GM12878 (cell line): ENCODE measurements at regions of chr22 and their contacts with region 1.

Region 1: DNA sequence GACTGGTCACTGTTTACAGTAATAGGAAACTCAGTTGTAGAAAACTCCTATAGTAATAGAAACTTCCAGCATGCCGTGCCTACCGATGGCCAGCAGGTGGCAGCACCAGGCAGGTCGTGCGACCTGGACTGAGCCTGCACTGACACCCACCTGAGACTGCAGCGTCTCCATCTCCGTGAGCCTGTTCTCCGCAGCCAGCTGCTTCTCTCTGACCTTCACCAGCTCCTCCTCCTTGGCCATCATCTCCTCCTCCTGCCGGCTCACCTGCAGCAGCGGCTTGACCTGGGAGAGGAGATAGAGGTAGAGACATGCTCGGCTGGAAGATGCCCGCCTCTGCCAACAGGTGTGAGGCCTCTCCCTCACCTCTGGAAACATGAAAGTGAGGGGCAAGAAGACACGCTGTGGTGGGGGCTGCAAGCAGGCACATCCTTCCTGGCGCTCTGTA is 48.5 kb downstream of the APOL1 start:
- DNase-seq: no peak
- ATAC-seq: peak; percentile 91
- H3K4me3 ChIP-seq: no peak overlapping the region
- H3K27ac ChIP-seq: no peak overlapping the region
- H3K4me1 ChIP-seq: no peaks in the 10 kb centered on the region
- H3K27me3 ChIP-seq: no peaks in the 10 kb centered on the region
- CTCF ChIP-seq: peak; percentile 92 to 95 (median 92)
- EP300 ChIP-seq: no peak
- POLR2A ChIP-seq: peak; percentile 69
- RAD21 ChIP-seq: peak; percentile 78

Region 2: GRCh38 chr22:35950262-35950661 is 351.1 kb before region 1 on chr22:
- CTCF ChIA-PET with region 1: no interaction called
- POLR2A ChIA-PET with region 1: no interaction called
- RAD21 ChIA-PET with region 1: no interaction called
- SMC1A ChIA-PET with region 1: no interaction called
- in situ Hi-C with region 1: no loop called
- intact Hi-C with region 1: no loop called
- DNase-seq: no peak
- ATAC-seq: no peak
- H3K4me3 ChIP-seq: no peak overlapping the region
- H3K27ac ChIP-seq: no peak overlapping the region
- H3K4me1 ChIP-seq: no peaks in the 10 kb centered on the region
- H3K27me3 ChIP-seq: peaks cover 0 to 3% of the 10 kb centered on the region in 2 experiments; a peak in 2 of 4 replicates
- CTCF ChIP-seq: no peak
- EP300 ChIP-seq: no peak
- POLR2A ChIP-seq: no peak
- RAD21 ChIP-seq: no peak

Region 3: DNA sequence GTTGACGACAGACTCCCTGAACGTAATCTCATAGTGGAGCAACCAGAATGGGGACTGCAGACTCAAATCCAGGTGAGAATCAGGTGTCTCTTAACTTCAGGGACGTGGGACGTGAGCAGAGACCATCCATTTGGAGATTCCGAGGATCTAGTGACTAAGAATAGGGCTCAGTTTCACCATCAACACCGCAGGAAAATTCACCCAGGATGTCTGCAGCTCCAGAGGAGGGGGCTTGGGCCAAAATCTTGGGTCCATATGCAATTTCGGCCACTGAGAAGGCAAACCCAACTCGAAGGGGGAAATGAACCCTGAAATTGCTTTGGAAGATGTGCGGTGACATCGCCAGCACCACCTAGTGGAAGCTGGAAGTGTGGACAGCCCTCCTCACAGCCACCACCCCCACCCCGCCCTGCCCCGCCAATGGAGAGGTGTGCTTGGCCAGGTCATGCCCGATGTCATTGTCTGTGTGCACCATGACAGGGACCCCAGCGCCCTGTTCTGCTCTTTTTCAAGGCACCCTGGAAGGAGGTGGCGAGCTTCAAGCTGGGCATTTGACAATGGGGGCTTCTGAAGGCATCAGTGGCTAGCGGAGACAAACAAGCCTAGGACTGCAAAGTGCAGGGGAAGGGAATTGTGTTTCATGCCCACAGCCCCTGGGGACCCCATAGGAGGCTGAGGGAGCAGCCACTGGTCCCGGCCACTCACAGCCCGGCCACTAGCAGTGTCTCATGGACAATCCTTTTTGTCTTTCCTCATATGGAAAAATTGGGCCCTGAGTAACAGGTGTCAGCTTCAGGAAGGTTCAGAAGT is 23.7 kb before region 1 on chr22:
- CTCF ChIA-PET with region 1: interaction called, 11 read pairs
- POLR2A ChIA-PET with region 1: no interaction called
- RAD21 ChIA-PET with region 1: interaction called, 3 read pairs
- SMC1A ChIA-PET with region 1: interaction called, 3 read pairs
- in situ Hi-C with region 1: no loop called
- intact Hi-C with region 1: no loop called
- DNase-seq: no peak
- ATAC-seq: peak; percentile 93
- H3K4me3 ChIP-seq: no peak overlapping the region
- H3K27ac ChIP-seq: no peak overlapping the region
- H3K4me1 ChIP-seq: peaks cover 6% of the 10 kb centered on the region
- H3K27me3 ChIP-seq: no peaks in the 10 kb centered on the region
- CTCF ChIP-seq: peak; percentile 79 to 85 (median 83)
- EP300 ChIP-seq: no peak
- POLR2A ChIP-seq: no peak
- RAD21 ChIP-seq: peak; percentile 64

Region 4: DNA sequence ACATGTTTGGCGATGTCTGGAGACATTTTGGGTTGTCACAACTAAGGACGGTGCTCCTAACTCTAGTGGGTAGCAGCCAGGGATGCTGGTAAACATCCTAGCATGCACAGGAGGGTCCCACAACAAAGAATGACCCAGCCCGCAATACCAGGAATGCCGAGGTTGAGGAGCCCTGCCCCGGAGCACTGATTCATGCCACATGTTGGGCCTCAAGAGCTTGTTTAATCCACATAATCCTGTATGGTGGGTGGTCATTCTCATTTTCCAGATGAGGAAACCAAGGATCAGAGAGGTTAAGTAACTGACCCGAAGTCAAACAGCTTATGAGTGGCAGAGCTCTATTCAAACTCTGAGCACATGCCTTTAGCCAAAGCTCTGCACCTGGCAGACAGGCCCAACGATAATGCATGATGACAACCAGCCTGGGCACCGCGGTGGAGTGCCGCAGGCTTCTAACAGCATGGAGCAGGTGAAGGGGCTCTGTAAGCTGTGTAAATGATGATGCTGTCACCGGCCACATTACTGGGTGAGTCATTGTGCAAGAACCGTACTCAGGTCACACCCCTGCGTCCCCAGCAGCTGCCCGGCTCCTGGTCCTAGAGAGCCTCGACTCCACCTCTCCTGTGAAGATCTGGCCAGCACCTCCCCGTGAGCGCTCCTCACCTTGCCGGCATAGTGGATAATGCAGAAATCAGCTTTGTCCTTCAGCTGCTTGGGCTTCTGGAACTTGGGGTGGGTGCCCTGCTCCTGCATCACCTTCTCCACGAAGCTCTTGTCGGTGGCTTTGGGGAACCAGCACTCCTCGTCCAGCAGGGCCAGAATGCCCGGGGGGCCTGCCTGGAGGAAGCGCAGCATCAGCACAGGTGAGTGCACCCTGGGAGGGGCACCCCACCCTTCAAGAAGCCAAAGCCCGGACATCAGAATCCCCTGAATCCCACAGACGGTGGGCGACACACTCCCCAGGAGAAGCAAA is 10.3 kb after region 1 on chr22:
- CTCF ChIA-PET with region 1: interaction called, 14 read pairs
- POLR2A ChIA-PET with region 1: interaction called, 5 read pairs
- RAD21 ChIA-PET with region 1: interaction called, 5 read pairs
- SMC1A ChIA-PET with region 1: interaction called, 4 read pairs
- in situ Hi-C with region 1: no loop called
- intact Hi-C with region 1: no loop called
- DNase-seq: no peak
- ATAC-seq: no peak
- H3K4me3 ChIP-seq: no peak overlapping the region
- H3K27ac ChIP-seq: no peak overlapping the region
- H3K4me1 ChIP-seq: no peaks in the 10 kb centered on the region
- H3K27me3 ChIP-seq: no peaks in the 10 kb centered on the region
- CTCF ChIP-seq: no peak
- EP300 ChIP-seq: no peak
- POLR2A ChIP-seq: peak; percentile 36; the same call in 1 of the 2 replicates
- RAD21 ChIP-seq: no peak

Region 5: DNA sequence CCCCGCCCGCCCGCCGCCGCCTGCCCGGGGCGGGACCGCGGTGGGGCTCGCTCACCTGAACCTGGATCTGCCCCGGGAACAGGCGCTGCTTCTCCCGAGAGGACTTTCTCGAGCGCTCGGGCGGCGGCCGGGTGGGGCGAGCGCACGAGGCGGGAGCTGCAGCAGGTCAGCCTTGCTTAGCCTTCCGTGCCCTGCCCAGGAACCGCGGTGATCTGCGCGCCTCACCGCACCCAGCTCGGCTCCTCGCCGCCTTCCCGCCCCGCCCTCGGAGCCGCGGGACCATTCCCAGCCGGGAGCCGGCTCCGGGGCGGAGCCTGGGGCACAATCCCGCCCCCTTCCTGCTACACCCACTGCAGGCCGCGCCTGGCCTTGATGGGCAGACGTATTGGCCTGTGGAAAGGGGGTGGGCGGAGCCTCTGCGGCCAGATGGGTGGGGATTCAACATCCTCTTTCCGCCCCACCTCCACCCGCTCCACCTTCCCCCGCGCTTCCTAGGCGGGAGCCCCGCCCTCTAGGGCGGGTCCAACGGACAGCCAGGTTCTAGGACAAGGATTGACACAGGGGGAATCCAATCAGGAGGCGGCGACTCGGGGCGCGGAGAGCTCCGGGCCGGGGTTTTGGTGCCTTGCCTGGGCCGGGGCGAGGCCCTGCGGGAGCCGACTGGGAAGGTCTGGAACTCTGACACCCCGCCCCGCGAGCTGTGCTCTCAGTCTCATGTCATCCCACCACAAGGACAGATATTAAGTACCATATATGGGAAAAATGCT is 86.5 kb after region 1 on chr22 and contains the start of gene MYH9:
- CTCF ChIA-PET with region 1: interaction called, 10 read pairs
- POLR2A ChIA-PET with region 1: no interaction called
- RAD21 ChIA-PET with region 1: interaction called, 3 read pairs
- SMC1A ChIA-PET with region 1: no interaction called
- in situ Hi-C with region 1: no loop called
- intact Hi-C with region 1: no loop called
- DNase-seq: peak; percentile 96
- ATAC-seq: peak; percentile 79
- H3K4me3 ChIP-seq: peak within 1 kb of the TSS; percentile 74
- H3K27ac ChIP-seq: peak within 1 kb of the TSS; percentile 88
- H3K4me1 ChIP-seq: peaks cover 8% of the 10 kb centered on the region
- H3K27me3 ChIP-seq: no peaks in the 10 kb centered on the region
- CTCF ChIP-seq: no peak
- EP300 ChIP-seq: no peak
- POLR2A ChIP-seq: peak; percentile 93
- RAD21 ChIP-seq: no peak
- polyA plus RNA-seq, gene MYH9: 5.1 to 8.1 TPM

Region 6: GRCh38 chr22:36454916-36455570 is 153.6 kb after region 1 on chr22:
- CTCF ChIA-PET with region 1: interaction called, 18 read pairs
- POLR2A ChIA-PET with region 1: no interaction called
- RAD21 ChIA-PET with region 1: interaction called, 4 read pairs
- SMC1A ChIA-PET with region 1: interaction called, 3 read pairs
- in situ Hi-C with region 1: no loop called
- intact Hi-C with region 1: no loop called
- DNase-seq: peak; percentile 50
- ATAC-seq: peak; percentile 80
- H3K4me3 ChIP-seq: peak overlapping the region; percentile 83
- H3K27ac ChIP-seq: peak overlapping the region; percentile 73
- H3K4me1 ChIP-seq: peaks cover 37% of the 10 kb centered on the region
- H3K27me3 ChIP-seq: no peaks in the 10 kb centered on the region
- CTCF ChIP-seq: peak in 2 of 3 experiments; percentile 10 to 23; a peak in 2 of 6 replicates
- EP300 ChIP-seq: no peak; a peak in 1 of 4 replicates
- POLR2A ChIP-seq: peak; percentile 82
- RAD21 ChIP-seq: peak; percentile 30; the same call in 1 of the 2 replicates

Region 7: DNA sequence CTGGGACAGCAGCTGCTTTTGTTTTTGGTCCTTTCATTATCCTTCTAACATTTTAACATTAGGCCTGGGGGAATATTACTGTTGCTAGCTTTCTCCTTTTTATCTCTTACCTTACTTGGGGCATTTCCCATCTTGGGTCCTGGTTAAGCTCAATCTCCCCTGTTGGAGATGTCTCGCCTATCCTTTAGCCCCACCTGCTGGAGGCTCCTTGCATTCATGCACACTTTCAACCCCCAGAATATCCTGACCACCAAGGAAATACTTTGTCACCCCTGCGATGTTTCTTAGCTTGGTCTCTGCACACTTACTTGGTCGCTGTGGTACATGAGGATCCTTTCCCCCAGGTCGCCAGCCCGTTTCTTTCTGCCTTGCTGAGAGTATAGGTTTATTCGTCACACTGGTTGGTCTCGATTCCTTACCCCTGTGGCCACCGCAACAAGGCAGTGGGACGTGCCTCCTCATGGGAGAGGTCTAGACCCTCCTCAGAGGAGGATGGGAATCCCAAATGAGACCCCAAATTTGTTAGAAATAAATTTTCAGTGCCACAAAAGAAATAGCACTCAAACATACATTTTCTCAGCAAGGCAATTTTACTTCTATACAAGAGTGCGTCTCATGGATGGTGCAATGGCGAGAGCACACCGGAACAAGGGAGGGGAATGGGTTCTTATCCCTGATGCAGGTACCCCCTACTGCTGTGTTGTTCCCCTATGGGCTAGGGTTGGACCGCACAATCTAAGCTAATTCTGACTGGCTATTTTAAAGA is 185.4 kb after region 1 on chr22:
- CTCF ChIA-PET with region 1: interaction called, 41 read pairs
- POLR2A ChIA-PET with region 1: no interaction called
- RAD21 ChIA-PET with region 1: interaction called, 6 read pairs
- SMC1A ChIA-PET with region 1: interaction called, 6 read pairs
- in situ Hi-C with region 1: no loop called
- intact Hi-C with region 1: no loop called
- DNase-seq: no peak
- ATAC-seq: peak; percentile 25; the same call in 2 of the 3 replicates
- H3K4me3 ChIP-seq: no peak overlapping the region
- H3K27ac ChIP-seq: no peak overlapping the region
- H3K4me1 ChIP-seq: no peaks in the 10 kb centered on the region
- H3K27me3 ChIP-seq: no peaks in the 10 kb centered on the region
- CTCF ChIP-seq: peak; percentile 48 to 61 (median 55)
- EP300 ChIP-seq: no peak
- POLR2A ChIP-seq: no peak
- RAD21 ChIP-seq: peak; percentile 53

Region 8: GRCh38 chr22:36628571-36629065 is 327.2 kb after region 1 on chr22:
- CTCF ChIA-PET with region 1: no interaction called
- POLR2A ChIA-PET with region 1: no interaction called
- RAD21 ChIA-PET with region 1: no interaction called
- SMC1A ChIA-PET with region 1: no interaction called
- in situ Hi-C with region 1: no loop called
- intact Hi-C with region 1: no loop called
- DNase-seq: no peak
- ATAC-seq: no peak
- H3K4me3 ChIP-seq: no peak overlapping the region
- H3K27ac ChIP-seq: no peak overlapping the region
- H3K4me1 ChIP-seq: no peaks in the 10 kb centered on the region
- H3K27me3 ChIP-seq: peaks cover 0 to 5% of the 10 kb centered on the region in 2 experiments; a peak in 2 of 4 replicates
- CTCF ChIP-seq: no peak
- EP300 ChIP-seq: no peak
- POLR2A ChIP-seq: no peak
- RAD21 ChIP-seq: no peak